PC-9 (cell line): ENCODE measurements at regions of chr7 and their contacts with region 1.

Region 1: DNA sequence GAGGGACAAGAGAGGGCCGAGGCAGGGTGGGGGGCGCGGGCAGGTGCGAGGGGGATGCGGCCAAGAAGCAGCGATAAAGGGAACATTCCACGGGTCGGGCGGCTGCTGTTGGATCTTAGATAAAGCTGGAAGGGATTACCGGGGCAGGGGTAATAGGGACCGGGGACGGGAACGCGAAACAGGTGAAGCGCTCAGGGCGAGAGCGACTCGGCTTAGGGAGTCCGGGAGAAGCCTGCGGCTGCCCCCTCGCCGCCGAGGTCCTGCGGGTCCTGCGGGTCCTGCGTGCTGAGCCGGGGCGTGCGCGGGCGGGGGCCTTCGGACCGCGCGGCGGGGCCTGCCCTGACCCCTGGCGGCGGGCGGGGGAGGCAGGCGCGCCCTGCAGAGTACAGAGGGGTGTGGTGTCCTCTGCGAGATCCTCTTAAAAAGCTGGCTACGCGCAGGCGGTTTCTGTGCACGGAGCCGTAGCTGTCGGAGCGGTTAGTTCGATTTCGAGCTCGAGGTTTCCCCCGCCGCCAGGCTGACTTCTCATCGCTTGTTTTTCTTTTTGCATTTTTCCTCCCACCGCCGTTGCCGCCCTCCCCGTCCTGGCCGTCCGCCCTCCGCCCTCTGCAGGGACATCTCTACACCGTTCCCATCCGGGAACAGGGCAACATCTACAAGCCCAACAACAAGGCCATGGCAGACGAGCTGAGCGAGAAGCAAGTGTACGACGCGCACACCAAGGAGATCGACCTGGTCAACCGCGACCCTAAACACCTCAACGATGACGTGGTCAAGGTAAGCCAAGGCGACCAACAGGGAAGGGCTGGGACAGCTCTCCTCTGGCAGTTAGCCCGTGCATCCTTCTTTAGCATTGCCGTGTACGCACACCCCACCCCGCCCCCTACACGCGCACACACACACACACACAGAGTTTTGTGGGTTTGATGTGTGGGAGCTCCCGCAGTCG is 1.4 kb downstream of the CAV1 start:
- DNase-seq: peak; percentile 63 to 90
- H3K4me3 ChIP-seq: peak overlapping the region; percentile 97
- H3K27ac ChIP-seq: peak overlapping the region; percentile 92
- H3K4me1 ChIP-seq: peaks cover 64% of the 10 kb centered on the region
- H3K27me3 ChIP-seq: no peaks in the 10 kb centered on the region
- CTCF ChIP-seq: peak; percentile 56

Region 2: GRCh38 chr7:116180302-116180701 is 345.9 kb before region 1 on chr7:
- CTCF ChIA-PET with region 1: interaction called, 5 read pairs
- POLR2A ChIA-PET with region 1: interaction called, 4 read pairs
- intact Hi-C with region 1: loop called (anchors 5 kb)
- DNase-seq: peak; percentile 25 to 49
- H3K4me3 ChIP-seq: no peak overlapping the region
- H3K27ac ChIP-seq: no peak overlapping the region
- H3K4me1 ChIP-seq: peaks cover 11% of the 10 kb centered on the region; the same call in 1 of the 2 replicates
- H3K27me3 ChIP-seq: no peaks in the 10 kb centered on the region
- CTCF ChIP-seq: peak; percentile 89

Region 3: DNA sequence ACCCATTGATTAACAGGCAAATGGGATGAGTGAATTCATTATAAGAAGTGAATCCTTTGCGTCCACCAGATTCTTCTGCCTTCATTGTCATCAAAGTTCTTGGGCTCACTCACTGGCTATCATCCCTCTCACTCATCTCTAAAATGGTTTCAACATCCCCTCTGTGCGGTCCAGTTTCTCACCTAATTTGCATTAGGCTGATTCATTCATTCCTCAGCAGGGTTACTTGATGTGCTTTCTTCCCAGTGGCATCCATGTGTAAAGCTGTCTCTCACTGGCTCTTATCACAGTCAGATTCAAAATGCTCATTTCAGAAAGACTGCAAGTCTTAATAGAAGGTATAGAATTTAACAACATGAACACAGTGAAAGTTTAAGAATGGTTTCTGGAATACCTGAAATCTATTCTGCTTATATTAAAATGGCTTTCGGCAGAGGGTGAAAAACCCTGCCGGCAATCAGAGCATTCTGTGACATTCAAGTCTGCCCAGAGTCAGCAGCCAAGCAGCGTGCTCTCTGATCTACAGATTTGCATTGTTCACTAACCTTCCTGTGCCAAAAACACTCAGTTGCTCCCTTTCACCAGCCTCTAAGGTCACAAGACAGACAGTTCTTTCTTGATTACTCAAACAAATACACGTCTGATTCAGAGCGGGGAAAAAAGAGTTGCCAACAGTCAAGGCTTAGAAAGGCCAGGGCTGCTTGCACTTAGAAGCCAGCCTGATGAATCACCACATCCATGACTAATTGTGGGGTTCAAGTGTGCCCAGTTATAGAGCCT is 209.2 kb before region 1 on chr7:
- CTCF ChIA-PET with region 1: interaction called, 5 read pairs
- POLR2A ChIA-PET with region 1: no interaction called
- intact Hi-C with region 1: loop called (anchors 1 kb)
- DNase-seq: peak; percentile 76 to 97
- H3K4me3 ChIP-seq: peak overlapping the region; percentile 29; the same call in 1 of the 2 replicates
- H3K27ac ChIP-seq: peak overlapping the region; percentile 88
- H3K4me1 ChIP-seq: peaks cover 31% of the 10 kb centered on the region
- H3K27me3 ChIP-seq: no peaks in the 10 kb centered on the region
- CTCF ChIP-seq: no peak

Region 4: DNA sequence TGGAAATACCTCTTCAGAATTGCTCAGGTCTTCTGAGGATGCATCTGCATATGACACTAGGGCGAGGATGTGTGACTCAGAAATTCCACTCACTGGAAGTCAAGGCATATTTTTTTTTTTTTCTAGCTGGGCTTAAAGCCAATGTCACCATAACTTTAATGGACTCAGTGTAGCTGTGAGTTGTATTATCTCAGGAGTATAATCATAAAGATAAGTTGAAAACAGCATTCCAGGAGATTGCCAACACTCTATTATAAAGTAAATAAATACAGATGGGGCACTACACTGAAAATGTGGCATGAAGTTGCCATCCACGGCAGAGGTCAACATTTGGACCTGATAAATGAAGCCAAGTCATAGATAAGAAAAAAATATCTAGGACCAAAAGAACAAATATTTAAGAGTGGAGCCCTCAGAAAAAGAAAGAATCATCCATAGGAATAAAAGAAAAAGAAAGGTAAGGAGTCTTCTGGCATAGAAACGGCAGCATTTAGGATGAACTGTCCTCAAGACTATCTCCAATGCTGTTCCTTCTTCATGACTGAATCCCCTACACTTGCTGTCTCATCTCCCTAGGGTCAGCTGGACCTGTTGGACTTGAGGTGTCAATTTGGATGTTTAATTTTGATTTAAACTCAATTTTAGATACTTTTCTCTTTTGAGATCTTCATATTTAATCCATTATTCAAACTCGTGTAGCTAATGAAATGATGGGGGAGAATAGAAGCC is 99.6 kb before region 1 on chr7:
- CTCF ChIA-PET with region 1: no interaction called
- POLR2A ChIA-PET with region 1: interaction called, 7 read pairs
- intact Hi-C with region 1: loop called (anchors 1 kb)
- DNase-seq: peak; percentile 56 to 91
- H3K4me3 ChIP-seq: no peak overlapping the region
- H3K27ac ChIP-seq: peak overlapping the region; percentile 59
- H3K4me1 ChIP-seq: peaks cover 26% of the 10 kb centered on the region
- H3K27me3 ChIP-seq: no peaks in the 10 kb centered on the region
- CTCF ChIP-seq: no peak

Region 5: GRCh38 chr7:116461500-116461899 is 64.7 kb before region 1 on chr7:
- CTCF ChIA-PET with region 1: no interaction called
- POLR2A ChIA-PET with region 1: no interaction called
- intact Hi-C with region 1: loop called (anchors 1 kb)
- DNase-seq: no peak
- H3K4me3 ChIP-seq: no peak overlapping the region
- H3K27ac ChIP-seq: no peak overlapping the region
- H3K4me1 ChIP-seq: peaks cover 26% of the 10 kb centered on the region
- H3K27me3 ChIP-seq: no peaks in the 10 kb centered on the region
- CTCF ChIP-seq: no peak

Region 6: DNA sequence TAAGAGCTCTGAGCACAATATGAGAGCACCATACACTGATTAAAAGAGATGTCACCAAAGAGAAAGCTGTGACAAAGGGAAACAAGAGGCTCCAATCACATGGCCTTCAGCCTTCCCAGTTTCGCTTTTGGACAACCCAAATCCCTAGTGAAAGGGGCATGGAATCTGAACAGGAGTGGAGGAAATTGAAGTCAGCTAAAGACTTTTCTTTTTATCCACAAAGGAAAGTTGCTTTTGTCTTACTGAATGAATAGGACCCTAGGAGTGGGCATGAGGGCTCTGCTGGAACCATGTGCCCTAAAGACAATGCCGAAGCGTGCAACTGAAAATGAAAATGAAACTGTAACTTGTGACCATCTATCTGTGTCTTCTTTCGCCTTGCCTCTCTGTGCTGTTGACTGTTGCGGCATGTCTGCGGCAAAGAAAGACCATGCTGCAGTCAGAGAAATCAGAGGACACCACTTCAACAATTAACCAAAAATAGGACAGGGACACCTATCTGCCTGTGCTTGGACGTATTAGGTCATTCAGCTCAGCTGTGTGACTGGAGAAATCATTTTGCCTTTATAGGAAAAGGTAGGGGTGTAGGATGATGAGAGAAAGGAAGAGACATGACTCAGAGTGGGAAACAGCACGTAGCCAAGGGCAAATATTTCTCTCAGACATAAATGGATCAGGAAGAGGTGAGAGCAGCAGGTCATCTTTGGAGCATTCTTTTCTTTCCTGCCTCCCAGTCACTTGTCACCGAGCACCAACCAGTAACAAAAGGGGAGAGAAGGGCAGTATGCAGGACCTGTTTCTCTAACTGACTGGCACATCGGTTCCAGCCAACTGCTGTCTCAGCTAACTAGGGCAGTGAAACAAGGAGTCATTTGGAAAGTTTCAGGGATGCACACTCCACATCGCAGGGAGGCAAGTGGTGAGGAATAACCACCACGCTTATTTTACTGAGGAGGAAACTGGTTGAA is 14.4 kb before region 1 on chr7:
- CTCF ChIA-PET with region 1: interaction called, 3 read pairs
- POLR2A ChIA-PET with region 1: interaction called, 5 read pairs
- intact Hi-C with region 1: loop called (anchors 1 kb)
- DNase-seq: peak; percentile 59 to 91
- H3K4me3 ChIP-seq: peak overlapping the region; percentile 62
- H3K27ac ChIP-seq: peak overlapping the region; percentile 84
- H3K4me1 ChIP-seq: peaks cover 24% of the 10 kb centered on the region
- H3K27me3 ChIP-seq: no peaks in the 10 kb centered on the region
- CTCF ChIP-seq: no peak

Region 7: DNA sequence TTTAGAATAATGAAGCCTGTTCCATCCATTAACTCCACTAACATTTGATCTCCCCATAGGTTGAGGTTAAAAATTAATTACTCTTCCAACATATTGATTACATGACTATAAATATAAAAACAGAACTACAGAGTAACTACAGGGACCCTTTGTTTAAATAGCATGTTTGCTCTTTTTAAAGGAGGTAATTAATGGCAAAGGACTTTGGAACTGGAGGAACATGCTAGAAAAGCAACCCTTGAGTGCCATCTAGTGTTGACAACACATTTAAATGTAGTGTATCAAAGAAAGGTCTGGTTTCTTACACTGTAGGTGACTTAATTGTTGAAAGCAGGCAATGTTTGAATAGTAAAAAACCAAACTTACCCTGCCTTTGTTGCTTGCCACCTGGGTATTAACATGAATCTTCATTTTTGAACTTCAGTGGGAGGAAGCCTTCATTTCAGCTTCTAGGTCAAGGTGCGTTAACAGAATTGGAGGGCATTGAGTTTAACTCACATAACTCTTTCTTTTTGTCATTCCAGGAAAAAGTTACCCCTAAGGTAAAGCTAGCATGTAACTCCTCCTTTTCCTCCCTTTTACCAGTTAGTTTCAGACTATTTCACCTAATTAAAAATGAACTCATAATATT is 283.6 kb after region 1 on chr7:
- CTCF ChIA-PET with region 1: no interaction called
- POLR2A ChIA-PET with region 1: interaction called, 3 read pairs
- intact Hi-C with region 1: loop called (anchors 5 kb)
- DNase-seq: peak; percentile 31 to 71
- H3K4me3 ChIP-seq: peak overlapping the region; percentile 25; the same call in 1 of the 2 replicates
- H3K27ac ChIP-seq: peak overlapping the region; percentile 81
- H3K4me1 ChIP-seq: peaks cover 44% of the 10 kb centered on the region
- H3K27me3 ChIP-seq: no peaks in the 10 kb centered on the region
- CTCF ChIP-seq: peak; percentile 87

Region 8: GRCh38 chr7:116851175-116851574 is 325.0 kb after region 1 on chr7:
- CTCF ChIA-PET with region 1: no interaction called
- POLR2A ChIA-PET with region 1: no interaction called
- intact Hi-C with region 1: no loop called
- DNase-seq: no peak
- H3K4me3 ChIP-seq: no peak overlapping the region
- H3K27ac ChIP-seq: no peak overlapping the region
- H3K4me1 ChIP-seq: no peaks in the 10 kb centered on the region
- H3K27me3 ChIP-seq: no peaks in the 10 kb centered on the region
- CTCF ChIP-seq: no peak